ENCODE measurements at regions of chr5 and their contacts with region 1.

Region 1: GRCh38 chr5:80093796-80094195 is 58.6 kb downstream of the THBS4 start:
- DNase-seq: no peak
- ATAC-seq: no peak

Region 2: DNA sequence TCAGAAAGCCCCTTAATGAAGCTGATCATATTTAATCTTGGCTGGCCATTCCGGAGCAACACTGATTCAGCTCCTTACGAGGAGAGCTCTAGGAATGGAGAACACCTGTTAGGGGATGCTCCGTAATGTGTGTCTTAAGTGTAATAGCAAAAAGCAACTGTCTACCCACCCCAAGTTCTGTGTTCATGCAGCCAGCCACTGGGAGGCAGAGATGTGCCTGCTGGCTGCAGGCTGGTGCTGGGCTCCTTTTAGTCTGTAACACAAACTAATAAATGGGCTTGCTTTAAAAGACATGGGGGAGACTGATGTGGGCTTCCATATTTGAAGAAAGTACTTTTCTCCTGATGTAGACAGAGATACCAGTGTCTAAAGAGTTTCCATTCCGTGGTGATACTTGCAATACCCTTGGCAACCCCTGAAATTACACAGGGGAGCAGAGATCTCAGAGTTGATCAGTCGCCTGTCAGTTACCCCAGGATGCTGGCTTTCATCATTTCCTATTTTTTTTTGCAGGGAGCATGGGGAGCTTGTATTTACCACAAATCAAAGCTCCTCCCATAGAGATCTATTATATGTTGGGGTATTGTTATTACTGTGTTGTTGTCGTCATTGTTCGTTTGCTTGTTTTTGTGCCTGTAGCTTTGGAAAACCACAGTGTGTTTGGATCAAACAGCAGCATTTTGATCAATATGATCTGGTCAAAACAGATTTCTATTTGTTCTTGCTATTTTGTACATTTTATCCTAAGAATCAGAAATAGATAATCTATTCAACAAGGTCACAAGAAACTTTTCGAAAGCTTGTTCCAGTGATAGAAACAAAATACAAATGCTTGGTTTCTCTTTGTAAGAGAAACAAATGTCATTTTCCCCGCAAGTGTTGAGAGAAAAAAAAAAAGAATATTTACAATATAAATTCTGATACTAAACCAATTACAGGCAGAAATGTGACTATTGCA is 168.6 kb before region 1 on chr5:
- intact Hi-C with region 1: no loop called
- DNase-seq: no peak
- ATAC-seq: no peak

Region 3: GRCh38 chr5:80308526-80308925 is 214.7 kb after region 1 on chr5:
- intact Hi-C with region 1: loop called (anchors 2 kb)
- DNase-seq: no peak
- ATAC-seq: no peak

Measured in left ventricle myocardium superior (tissue), 1 donor.